Breast epithelium (tissue), 4 donors: ENCODE measurements at regions of chr16 and their contacts with region 1.

Region 1: GRCh38 chr16:88379694-88380040 is 3.1 kb upstream of the ZNF469 start:
- DNase-seq: no peak
- H3K4me3 ChIP-seq: no peak overlapping the region
- H3K27ac ChIP-seq: no peak overlapping the region
- H3K4me1 ChIP-seq: peaks cover 5 to 8% of the 10 kb centered on the region in 2 donors
- H3K27me3 ChIP-seq: no peaks in the 10 kb centered on the region
- CTCF ChIP-seq: no peak
- POLR2A ChIP-seq: no peak

Region 2: GRCh38 chr16:88472637-88473205 is 93.1 kb after region 1 on chr16:
- intact Hi-C with region 1: loop called (anchors 1 kb)
- DNase-seq: no peak
- H3K4me3 ChIP-seq: peak overlapping the region in 2 of 3 donors; percentile 30 to 51
- H3K27ac ChIP-seq: peak overlapping the region in 1 of 2 donors; percentile 71
- H3K4me1 ChIP-seq: no peaks in the 10 kb centered on the region
- H3K27me3 ChIP-seq: no peaks in the 10 kb centered on the region
- CTCF ChIP-seq: no peak
- POLR2A ChIP-seq: no peak

Region 3: GRCh38 chr16:89701427-89702406 is 1322.0 kb after region 1 on chr16 and contains the start of gene SPATA2L:
- intact Hi-C with region 1: no loop called
- DNase-seq: peak; percentile 95 to 96
- H3K4me3 ChIP-seq: peak within 1 kb of the TSS; percentile 61 to 75 (median 71)
- H3K27ac ChIP-seq: peak within 1 kb of the TSS; percentile 80 to 96
- H3K4me1 ChIP-seq: no peaks in the 10 kb centered on the region
- H3K27me3 ChIP-seq: no peaks in the 10 kb centered on the region
- CTCF ChIP-seq: no peak
- POLR2A ChIP-seq: peak; percentile 62
- total RNA-seq, gene SPATA2L: 9.0 to 15.1 (median 14.3) TPM